ENCODE measurements at regions of chr3 and their contacts with region 1.

Region 1: DNA sequence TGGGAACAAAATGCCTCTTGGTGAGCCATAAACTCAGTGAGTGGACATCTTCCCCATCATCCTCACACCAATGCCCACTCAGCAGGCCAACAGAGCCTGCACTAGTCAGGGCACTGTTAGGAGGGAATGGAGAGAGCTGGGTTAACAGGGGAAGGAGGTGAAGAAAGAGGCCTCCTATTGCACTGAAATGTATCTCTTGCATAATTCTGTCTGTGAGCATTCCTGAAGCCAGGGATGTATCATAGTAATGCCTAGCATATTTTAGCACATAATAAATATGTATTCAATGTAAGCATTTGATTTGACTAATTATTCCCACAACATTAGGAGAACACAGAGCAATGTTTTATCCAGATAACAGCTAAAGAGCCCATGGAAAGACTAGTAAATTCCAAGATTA is 81.2 kb downstream of the ANO10 start:
- DNase-seq: no peak
- ATAC-seq: no peak
- H3K4me3 ChIP-seq: no peak overlapping the region
- H3K27ac ChIP-seq: no peak overlapping the region
- H3K4me1 ChIP-seq: no peaks in the 10 kb centered on the region
- H3K27me3 ChIP-seq: no peaks in the 10 kb centered on the region
- CTCF ChIP-seq: no peak

Region 2: GRCh38 chr3:43638594-43639447 is 98.2 kb after region 1 on chr3:
- CTCF ChIA-PET with region 1: no interaction called
- POLR2A ChIA-PET with region 1: no interaction called
- intact Hi-C with region 1: loop called (anchors 1 kb)
- DNase-seq: peak; percentile 86
- ATAC-seq: peak; percentile 83
- H3K4me3 ChIP-seq: peak overlapping the region; percentile 28; the same call in 1 of the 2 replicates
- H3K27ac ChIP-seq: peak overlapping the region; percentile 59
- H3K4me1 ChIP-seq: peaks cover 22% of the 10 kb centered on the region
- H3K27me3 ChIP-seq: no peaks in the 10 kb centered on the region
- CTCF ChIP-seq: peak; percentile 75

Region 3: GRCh38 chr3:43742920-43743319 is 202.3 kb after region 1 on chr3:
- CTCF ChIA-PET with region 1: no interaction called
- POLR2A ChIA-PET with region 1: no interaction called
- intact Hi-C with region 1: loop called (anchors 5 kb)
- DNase-seq: no peak
- ATAC-seq: no peak
- H3K4me3 ChIP-seq: no peak overlapping the region
- H3K27ac ChIP-seq: no peak overlapping the region
- H3K4me1 ChIP-seq: peaks cover 7% of the 10 kb centered on the region
- H3K27me3 ChIP-seq: no peaks in the 10 kb centered on the region
- CTCF ChIP-seq: peak; percentile 50

Region 4: GRCh38 chr3:43769471-43770425 is 229.1 kb after region 1 on chr3:
- CTCF ChIA-PET with region 1: no interaction called
- POLR2A ChIA-PET with region 1: no interaction called
- intact Hi-C with region 1: loop called (anchors 2 kb)
- DNase-seq: peak; percentile 99
- ATAC-seq: peak; percentile 96
- H3K4me3 ChIP-seq: peak overlapping the region; percentile 41
- H3K27ac ChIP-seq: peak overlapping the region; percentile 5; the same call in 1 of the 2 replicates
- H3K4me1 ChIP-seq: peaks cover 63% of the 10 kb centered on the region
- H3K27me3 ChIP-seq: no peaks in the 10 kb centered on the region
- CTCF ChIP-seq: peak; percentile 93

Region 5: DNA sequence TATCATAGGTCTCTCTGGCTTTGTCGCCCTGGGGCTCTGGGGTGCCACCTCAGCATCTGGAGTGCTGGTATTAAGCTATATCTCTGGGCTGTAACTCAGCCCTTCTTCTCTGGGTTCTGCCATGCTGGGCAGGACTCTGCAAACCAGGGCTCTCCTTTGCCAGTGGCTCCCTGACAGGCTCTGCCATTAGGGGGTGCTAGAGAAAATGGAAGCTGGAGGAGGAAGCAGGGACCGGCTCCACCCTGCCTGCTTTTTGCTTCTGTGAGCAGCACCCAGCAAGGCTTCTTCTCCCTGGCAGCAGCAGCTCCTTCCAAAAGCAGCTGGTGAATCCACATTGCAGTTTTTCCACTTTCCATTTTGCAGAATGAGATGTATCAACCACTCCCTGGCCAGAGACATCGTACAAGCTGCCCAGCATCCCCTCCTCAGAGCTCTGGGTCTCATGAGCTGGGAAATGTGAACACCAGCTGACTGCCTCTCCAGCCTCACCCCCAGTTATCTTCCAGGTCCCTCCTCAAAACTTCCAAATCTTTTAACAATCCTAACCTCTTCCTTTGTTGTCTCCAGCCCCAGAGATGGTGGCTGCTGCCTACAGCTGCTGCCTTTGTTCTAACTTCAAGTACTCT is 315.2 kb after region 1 on chr3:
- CTCF ChIA-PET with region 1: no interaction called
- POLR2A ChIA-PET with region 1: no interaction called
- intact Hi-C with region 1: loop called (anchors 10 kb)
- DNase-seq: peak; percentile 82
- ATAC-seq: peak; percentile 73
- H3K4me3 ChIP-seq: no peak overlapping the region
- H3K27ac ChIP-seq: no peak overlapping the region
- H3K4me1 ChIP-seq: peaks cover 36% of the 10 kb centered on the region
- H3K27me3 ChIP-seq: no peaks in the 10 kb centered on the region
- CTCF ChIP-seq: peak; percentile 85

Region 6: GRCh38 chr3:44235604-44236484 is 695.2 kb after region 1 on chr3:
- CTCF ChIA-PET with region 1: no interaction called
- POLR2A ChIA-PET with region 1: no interaction called
- intact Hi-C with region 1: loop called (anchors 5 kb)
- DNase-seq: peak; percentile 93
- ATAC-seq: peak; percentile 78
- H3K4me3 ChIP-seq: no peak overlapping the region
- H3K27ac ChIP-seq: no peak overlapping the region
- H3K4me1 ChIP-seq: 0 out of 2 replicates have a peak, but pooled peaks cover 4% of the 10 kb centered on the region
- H3K27me3 ChIP-seq: no peaks in the 10 kb centered on the region
- CTCF ChIP-seq: peak; percentile 91

Measured in PC-3 (cell line).